ENCODE measurements at regions of chr17 and their contacts with region 1.

Region 1: GRCh38 chr17:40113110-40113906 is 8.5 kb upstream of the MSL1 start:
- DNase-seq: peak; percentile 96

Region 2: GRCh38 chr17:40062329-40063186 is 50.8 kb before region 1 on chr17 and contains the start of gene THRA:
- intact Hi-C with region 1: loop called in 1 of 2 experiments (anchors 10 kb)
- DNase-seq: peak; percentile 88
- total RNA-seq, gene THRA: 50.8 to 65.8 TPM

Region 3: DNA sequence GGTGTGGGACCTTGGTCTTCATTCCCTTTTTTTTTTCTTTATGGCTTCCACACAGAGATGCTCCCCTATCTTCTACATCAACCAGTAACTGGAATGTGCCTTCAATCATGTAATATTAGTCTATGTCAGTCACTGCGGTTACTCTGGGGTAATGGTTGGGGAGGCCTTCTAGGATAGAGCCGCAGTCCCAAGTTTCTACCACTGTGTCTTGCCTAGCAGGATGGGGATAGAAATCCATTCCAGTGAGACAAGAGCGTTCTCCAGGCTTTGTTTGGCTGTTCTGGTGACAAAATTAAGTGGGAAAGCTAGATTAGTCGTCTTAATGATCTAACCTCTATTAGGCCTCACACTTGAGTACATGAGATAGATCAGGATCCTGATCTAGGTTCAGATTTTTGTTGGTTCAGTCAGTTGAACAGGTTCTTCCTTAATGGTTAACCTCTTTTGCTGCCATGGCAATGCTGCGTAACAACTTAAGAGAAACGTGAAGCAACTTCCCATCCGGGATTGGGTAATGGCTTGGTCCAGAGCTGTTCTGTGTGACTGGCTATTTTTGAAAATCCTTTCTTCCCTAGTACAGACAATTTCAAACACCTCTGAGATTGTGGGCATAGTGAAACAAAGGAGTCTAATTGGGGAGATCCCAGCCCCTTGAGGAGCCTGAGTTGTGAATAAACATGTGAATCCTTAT is 17.2 kb after region 1 on chr17:
- intact Hi-C with region 1: loop called in 1 of 2 experiments (anchors 1 kb)
- DNase-seq: no peak

Measured in posterior vena cava (tissue), 2 donors.